ENCODE measurements at regions of chr11 and their contacts with region 1.

Region 1: DNA sequence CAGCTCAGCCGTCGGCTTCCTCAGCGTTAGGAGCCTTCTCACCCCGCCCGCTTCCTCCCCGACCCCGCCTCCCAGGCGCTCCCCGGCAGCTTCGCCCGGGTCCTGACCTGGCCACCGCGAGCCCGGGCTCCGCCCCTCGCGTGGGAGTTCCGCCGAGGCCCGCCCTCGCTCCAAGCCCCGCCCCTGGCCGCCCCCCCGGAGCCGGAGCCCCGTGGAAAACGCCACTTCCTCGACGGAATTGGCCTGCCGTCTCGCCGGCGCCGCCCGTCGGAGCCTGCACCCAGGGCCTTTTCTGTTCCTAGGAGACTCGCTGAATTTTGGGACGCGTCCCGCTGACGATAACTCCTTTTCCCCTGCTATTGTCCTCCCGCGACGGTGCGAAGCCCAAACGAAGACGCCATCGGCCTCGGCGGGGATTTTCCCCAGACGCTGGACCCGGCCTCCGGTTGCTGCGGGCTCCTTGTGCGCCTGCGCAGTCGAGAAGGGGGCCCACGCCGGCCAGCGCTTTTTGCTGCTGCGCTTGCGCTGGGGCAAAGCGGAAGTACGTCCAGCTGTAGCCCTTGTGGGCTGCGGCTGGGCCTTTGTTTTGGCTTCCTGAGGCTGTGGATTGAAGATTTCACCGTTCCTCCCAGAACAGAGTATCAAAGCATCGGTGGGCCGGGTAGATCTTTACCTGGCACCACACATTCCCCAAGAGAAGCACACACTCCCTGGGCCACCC is 10.0 kb downstream of the RELA start:
- DNase-seq: peak; percentile 99
- H3K4me3 ChIP-seq: peak overlapping the region; percentile 51 to 56
- H3K27ac ChIP-seq: peak overlapping the region; percentile 92 to 98
- H3K4me1 ChIP-seq: peaks cover 11 to 24% of the 10 kb centered on the region in 2 experiments
- H3K27me3 ChIP-seq: no peaks in the 10 kb centered on the region
- CTCF ChIP-seq: no peak
- EP300 ChIP-seq: peak in 1 of 2 experiments; percentile 30; a peak in 1 of 4 replicates
- RAD21 ChIP-seq: no peak

Region 2: GRCh38 chr11:64960719-64961118 is 692.0 kb before region 1 on chr11:
- CTCF ChIA-PET with region 1: no interaction called
- POLR2A ChIA-PET with region 1: no interaction called
- DNase-seq: peak; percentile 54
- H3K4me3 ChIP-seq: no peak overlapping the region
- H3K27ac ChIP-seq: no peak overlapping the region
- H3K4me1 ChIP-seq: peaks cover 0 to 3% of the 10 kb centered on the region in 2 experiments; a peak in 1 of 4 replicates
- H3K27me3 ChIP-seq: no peaks in the 10 kb centered on the region
- CTCF ChIP-seq: no peak
- EP300 ChIP-seq: no peak
- RAD21 ChIP-seq: no peak

Region 3: GRCh38 chr11:65662799-65663638 is 10.3 kb after region 1 on chr11 and contains the start of gene RELA:
- CTCF ChIA-PET with region 1: interaction called, 13 read pairs
- POLR2A ChIA-PET with region 1: interaction called, 24 read pairs
- DNase-seq: peak; percentile 98
- H3K4me3 ChIP-seq: peak within 1 kb of the TSS; percentile 83 to 90
- H3K27ac ChIP-seq: peak within 1 kb of the TSS; percentile 95 to 97
- H3K4me1 ChIP-seq: peaks cover 9% of the 10 kb centered on the region in 2 experiments; a peak in 3 of 4 replicates
- H3K27me3 ChIP-seq: no peaks in the 10 kb centered on the region
- CTCF ChIP-seq: no peak
- EP300 ChIP-seq: no peak
- RAD21 ChIP-seq: no peak
- polyA plus RNA-seq, gene RELA: 28.1 and 49.5 TPM in 2 replicates

Region 4: DNA sequence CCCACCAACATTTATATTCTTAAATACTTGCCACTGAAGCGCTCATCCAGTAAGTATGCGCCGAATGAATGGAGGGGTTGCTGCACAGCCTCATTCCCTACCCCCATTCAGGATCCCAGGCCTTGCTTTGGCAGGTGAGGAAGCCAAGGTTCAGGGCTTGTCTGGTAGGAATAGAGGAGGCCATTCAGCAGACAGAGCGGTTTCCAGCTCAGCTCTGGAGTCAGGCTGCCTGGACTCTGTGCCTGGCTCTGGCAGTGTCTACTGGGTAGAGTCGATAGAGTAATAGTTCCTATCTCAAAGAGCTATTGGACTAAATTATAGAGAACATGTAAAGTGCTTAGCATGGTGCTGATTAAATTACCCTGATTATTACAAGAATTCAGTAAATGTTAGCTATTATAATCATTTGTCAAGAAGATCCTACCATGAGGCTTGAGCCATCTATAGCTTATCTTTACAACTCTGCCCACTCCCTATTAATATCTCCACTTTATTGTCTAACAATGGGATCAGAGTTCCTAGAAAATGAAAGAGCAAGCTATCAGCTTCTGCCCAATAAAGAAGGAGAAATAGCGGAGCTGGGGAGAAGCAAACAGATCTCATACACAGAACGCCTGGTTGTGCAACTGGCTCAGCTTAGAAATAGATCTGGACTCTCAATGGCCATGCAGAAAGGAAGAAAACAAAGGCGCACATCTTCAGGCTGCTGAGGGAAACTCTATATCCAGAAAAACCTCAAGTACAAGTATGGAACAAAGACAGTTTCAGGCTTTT is 174.5 kb after region 1 on chr11:
- CTCF ChIA-PET with region 1: no interaction called
- POLR2A ChIA-PET with region 1: no interaction called
- DNase-seq: no peak
- H3K4me3 ChIP-seq: no peak overlapping the region
- H3K27ac ChIP-seq: no peak overlapping the region
- H3K4me1 ChIP-seq: no peaks in the 10 kb centered on the region; a peak in 1 of 4 replicates
- H3K27me3 ChIP-seq: no peaks in the 10 kb centered on the region
- CTCF ChIP-seq: no peak
- EP300 ChIP-seq: no peak
- RAD21 ChIP-seq: no peak